Caco-2 (cell line): ENCODE measurements at regions of chr3 and their contacts with region 1.

Region 1: GRCh38 chr3:180679178-180680096 is at the start of gene CCDC39:
- DNase-seq: peak; percentile 71 to 79
- H3K4me3 ChIP-seq: peak within 1 kb of the TSS; percentile 49
- H3K4me3 Mint-ChIP-seq: peak within 1 kb of the TSS; percentile 72
- H3K27ac Mint-ChIP-seq: peak within 1 kb of the TSS; percentile 54
- H3K4me1 ChIP-seq: no peaks in the 10 kb centered on the region
- H3K4me1 Mint-ChIP-seq: no peaks in the 10 kb centered on the region
- H3K27me3 ChIP-seq: no peaks in the 10 kb centered on the region
- H3K27me3 Mint-ChIP-seq: peaks cover 12% of the 10 kb centered on the region
- CTCF ChIP-seq: no peak
- total RNA-seq, gene CCDC39: not detected in 2 replicates

Region 2: GRCh38 chr3:180457225-180457624 is 222.2 kb before region 1 on chr3:
- CTCF ChIA-PET with region 1: no interaction called
- POLR2A ChIA-PET with region 1: no interaction called
- intact Hi-C with region 1: no loop called
- DNase-seq: no peak
- H3K4me3 ChIP-seq: no peak overlapping the region
- H3K4me3 Mint-ChIP-seq: no peak overlapping the region
- H3K27ac Mint-ChIP-seq: no peak overlapping the region
- H3K4me1 ChIP-seq: no peaks in the 10 kb centered on the region
- H3K4me1 Mint-ChIP-seq: no peaks in the 10 kb centered on the region
- H3K27me3 ChIP-seq: no peaks in the 10 kb centered on the region
- H3K27me3 Mint-ChIP-seq: no peaks in the 10 kb centered on the region
- CTCF ChIP-seq: no peak

Region 3: GRCh38 chr3:180601688-180602666 is 77.5 kb before region 1 on chr3 and contains the start of gene TTC14:
- CTCF ChIA-PET with region 1: no interaction called
- POLR2A ChIA-PET with region 1: no interaction called
- intact Hi-C with region 1: loop called (anchors 2 kb)
- DNase-seq: peak; percentile 92 to 93
- H3K4me3 ChIP-seq: peak within 1 kb of the TSS; percentile 65
- H3K4me3 Mint-ChIP-seq: peak within 1 kb of the TSS; percentile 95
- H3K27ac Mint-ChIP-seq: peak within 1 kb of the TSS; percentile 91
- H3K4me1 ChIP-seq: peaks cover 6% of the 10 kb centered on the region; the same call in 1 of the 2 replicates
- H3K4me1 Mint-ChIP-seq: no peaks in the 10 kb centered on the region
- H3K27me3 ChIP-seq: no peaks in the 10 kb centered on the region
- H3K27me3 Mint-ChIP-seq: peaks cover 3% of the 10 kb centered on the region
- CTCF ChIP-seq: peak in 1 of 2 experiments; percentile 11
- total RNA-seq, gene TTC14: 30.6 and 39.7 TPM in 2 replicates